Activated CD8-positive, alpha-beta T cell treated with anti-CD3 and anti-CD28 coated beads for 36 hours (primary cell): ENCODE measurements at regions of chr2 and their contacts with region 1.

Region 1: DNA sequence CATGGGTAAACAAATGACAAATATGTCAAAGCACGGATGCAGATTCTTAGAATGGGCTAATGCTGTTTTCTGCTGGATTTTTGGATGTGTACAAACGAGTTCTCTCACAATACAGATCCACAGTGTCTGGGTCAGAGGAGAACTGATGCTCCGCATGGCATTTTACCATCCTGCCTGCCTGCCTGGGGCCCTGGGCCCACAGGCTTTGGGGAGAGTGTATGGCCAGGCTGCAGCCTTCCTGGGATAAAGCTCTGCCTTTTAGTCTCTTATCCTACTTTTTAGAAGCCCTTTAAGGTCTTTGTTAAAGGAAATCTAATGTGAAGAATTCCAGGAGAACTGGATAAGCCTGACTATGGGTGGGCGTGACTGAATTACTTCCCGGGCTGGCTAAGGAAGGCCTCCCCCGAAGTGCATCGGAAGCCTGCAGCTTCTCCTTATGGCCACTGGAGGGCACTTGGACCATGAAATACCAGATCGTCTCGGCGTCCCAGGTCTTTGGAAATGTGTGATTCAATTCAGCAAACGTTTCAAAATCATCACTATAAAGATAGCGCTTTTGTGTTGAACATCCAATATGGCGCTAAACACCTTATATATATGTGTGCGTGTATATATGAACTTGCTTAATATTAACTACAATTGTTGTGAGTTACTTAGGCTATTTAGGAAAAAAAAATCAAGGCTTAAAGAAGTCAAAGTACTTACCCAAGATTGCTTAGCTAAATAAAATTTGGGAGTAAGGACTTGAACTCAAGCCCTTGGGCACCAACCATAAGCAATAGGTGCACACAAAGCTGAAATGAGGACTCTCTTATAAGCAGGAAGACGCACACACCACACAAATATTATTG is 15.2 kb upstream of the DNPEP start:
- DNase-seq: peak; percentile 79
- ATAC-seq: peak; percentile 99
- H3K4me3 Mint-ChIP-seq: no peak overlapping the region
- H3K27ac Mint-ChIP-seq: no peak overlapping the region
- H3K4me1 Mint-ChIP-seq: no peaks in the 10 kb centered on the region
- H3K27me3 Mint-ChIP-seq: peaks cover 8% of the 10 kb centered on the region
- CTCF ChIP-seq: peak; percentile 77

Region 2: DNA sequence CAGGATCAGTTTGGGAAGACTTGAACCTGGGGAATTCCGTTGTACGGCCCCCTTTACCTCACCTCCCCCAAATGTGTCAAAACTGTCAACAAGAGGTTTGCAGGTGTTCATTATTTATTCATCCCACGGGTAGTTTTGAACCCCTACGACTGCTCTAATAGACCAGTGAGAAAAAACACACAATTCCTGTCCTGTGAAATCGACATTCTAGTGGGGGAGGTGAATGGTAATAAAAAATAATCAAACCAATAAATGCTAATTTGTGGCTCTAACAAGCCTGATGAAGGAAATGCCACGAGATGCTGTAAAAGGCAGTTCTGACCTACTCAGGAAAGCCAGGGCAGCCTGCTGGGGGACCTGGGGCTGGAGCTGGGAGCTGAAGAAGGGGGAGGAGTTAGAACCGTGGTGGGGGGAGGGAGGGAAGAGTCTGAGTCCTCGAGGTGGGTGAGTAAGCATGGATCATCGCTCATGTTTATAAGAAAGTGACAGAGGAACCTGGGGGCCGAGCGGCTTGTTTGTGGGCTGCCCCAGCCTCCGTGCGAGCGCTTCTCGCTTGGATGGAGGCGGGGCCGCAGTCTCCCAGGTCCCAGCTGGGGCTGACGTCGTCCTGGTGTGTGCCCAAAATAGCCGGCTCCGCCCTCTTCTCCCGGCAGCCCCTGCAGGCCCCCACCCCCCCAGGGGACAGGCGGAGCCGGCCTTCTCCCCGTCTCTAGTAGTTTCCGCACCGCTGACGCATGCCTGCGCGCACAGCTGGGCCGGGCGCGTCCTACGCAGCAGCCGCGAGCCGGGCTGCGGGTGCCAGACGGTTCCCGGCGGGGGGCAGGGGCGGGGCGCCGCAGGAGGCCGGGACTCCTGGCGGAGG is 124.0 kb before region 1 on chr2 and contains the start of gene DNAJB2:
- CTCF ChIA-PET with region 1: no interaction called
- POLR2A ChIA-PET with region 1: no interaction called
- intact Hi-C with region 1: no loop called
- DNase-seq: peak; percentile 100
- ATAC-seq: peak; percentile 86
- H3K4me3 Mint-ChIP-seq: peak within 1 kb of the TSS; percentile 80
- H3K27ac Mint-ChIP-seq: peak within 1 kb of the TSS; percentile 95
- H3K4me1 Mint-ChIP-seq: peaks cover 45% of the 10 kb centered on the region
- H3K27me3 Mint-ChIP-seq: no peaks in the 10 kb centered on the region
- CTCF ChIP-seq: no peak
- total RNA-seq, gene DNAJB2: 61.8 to 63.3 TPM

Region 3: GRCh38 chr2:219388127-219388844 is 14.6 kb before region 1 on chr2:
- CTCF ChIA-PET with region 1: interaction called, 84 read pairs
- POLR2A ChIA-PET with region 1: interaction called, 10 read pairs
- intact Hi-C with region 1: no loop called
- DNase-seq: peak; percentile 99
- ATAC-seq: peak; percentile 81
- H3K4me3 Mint-ChIP-seq: peak overlapping the region; percentile 72
- H3K27ac Mint-ChIP-seq: peak overlapping the region; percentile 85
- H3K4me1 Mint-ChIP-seq: peaks cover 21% of the 10 kb centered on the region
- H3K27me3 Mint-ChIP-seq: no peaks in the 10 kb centered on the region
- CTCF ChIP-seq: peak; percentile 58

Region 4: DNA sequence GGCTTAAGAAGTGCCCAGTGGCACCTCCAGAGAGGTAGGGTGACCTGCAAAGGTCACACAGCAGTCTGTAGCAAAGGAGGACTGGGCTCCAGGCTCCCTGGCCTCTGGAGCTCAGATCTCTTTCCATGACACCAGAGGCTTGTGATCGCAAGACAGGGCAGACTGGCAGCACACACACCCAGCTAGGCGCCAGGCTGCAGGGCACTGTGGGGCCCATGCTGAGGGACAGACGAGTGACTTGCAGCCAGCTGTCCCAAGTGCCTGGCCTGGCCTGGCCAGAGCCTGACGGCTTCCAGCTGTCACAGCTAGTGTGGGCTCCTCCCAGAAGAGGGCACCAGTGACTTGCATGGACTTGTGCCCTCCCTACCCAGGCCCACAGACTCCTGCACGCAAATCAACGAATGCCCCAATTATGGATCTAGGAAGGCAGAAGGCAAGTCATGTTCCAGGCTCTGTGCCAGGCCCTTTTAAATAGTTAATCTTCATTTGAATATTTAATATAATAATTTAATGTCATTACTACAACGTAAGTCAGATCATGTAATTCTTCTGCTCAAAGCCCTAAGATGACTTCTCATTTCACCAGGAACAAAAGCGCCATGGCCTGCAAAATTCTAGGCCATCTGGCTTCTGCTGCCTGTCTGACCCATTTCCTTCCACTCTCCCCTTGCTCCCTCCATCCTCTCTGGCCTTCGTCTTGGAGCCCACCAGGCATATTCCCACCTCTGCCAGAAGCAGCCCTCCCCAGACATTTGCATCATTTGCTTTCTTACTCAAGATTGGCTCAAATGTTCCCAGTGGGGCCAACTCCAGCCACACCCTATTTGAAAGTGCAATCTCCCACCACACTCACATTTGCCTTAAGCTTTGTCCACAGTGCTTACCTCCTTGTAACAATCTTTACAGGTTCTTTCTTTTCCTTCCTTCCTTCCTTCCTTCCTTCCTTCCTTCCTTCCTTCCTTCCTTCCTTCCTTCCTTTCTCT is 28.0 kb after region 1 on chr2:
- CTCF ChIA-PET with region 1: interaction called, 35 read pairs
- POLR2A ChIA-PET with region 1: no interaction called
- intact Hi-C with region 1: no loop called
- DNase-seq: no peak
- ATAC-seq: peak; percentile 58
- H3K4me3 Mint-ChIP-seq: no peak overlapping the region
- H3K27ac Mint-ChIP-seq: no peak overlapping the region
- H3K4me1 Mint-ChIP-seq: no peaks in the 10 kb centered on the region
- H3K27me3 Mint-ChIP-seq: peaks cover 16% of the 10 kb centered on the region
- CTCF ChIP-seq: no peak

Region 5: DNA sequence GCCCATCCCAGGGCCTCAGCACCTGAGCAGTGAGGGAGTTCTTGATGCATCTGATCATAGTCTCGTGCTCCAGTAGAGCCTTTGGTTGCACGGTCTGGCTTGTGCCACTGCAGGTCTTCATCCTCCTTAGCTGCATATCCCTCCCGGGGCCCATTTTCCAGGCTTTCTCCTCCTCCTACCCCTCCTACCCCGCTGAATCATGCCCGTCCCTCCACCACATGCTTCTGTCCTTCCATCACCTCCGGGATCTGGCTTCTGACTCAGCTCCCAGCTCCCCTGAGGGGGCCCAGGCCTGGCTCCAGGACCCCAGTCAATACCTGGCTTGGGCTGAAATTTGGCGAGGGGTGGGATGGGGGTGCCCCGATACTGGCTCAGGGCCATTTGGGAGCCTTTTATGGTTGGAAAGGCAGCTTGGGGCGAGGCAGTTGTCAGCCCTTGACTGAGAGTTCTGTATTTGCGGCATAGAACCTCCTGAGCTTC is 50.0 kb after region 1 on chr2:
- CTCF ChIA-PET with region 1: interaction called, 14 read pairs
- POLR2A ChIA-PET with region 1: interaction called, 6 read pairs
- intact Hi-C with region 1: no loop called
- DNase-seq: no peak
- ATAC-seq: no peak
- H3K4me3 Mint-ChIP-seq: no peak overlapping the region
- H3K27ac Mint-ChIP-seq: no peak overlapping the region
- H3K4me1 Mint-ChIP-seq: peaks cover 25% of the 10 kb centered on the region
- H3K27me3 Mint-ChIP-seq: peaks cover 8% of the 10 kb centered on the region
- CTCF ChIP-seq: no peak

Region 6: GRCh38 chr2:219475697-219476651 is 73.1 kb after region 1 on chr2:
- CTCF ChIA-PET with region 1: interaction called, 21 read pairs
- POLR2A ChIA-PET with region 1: no interaction called
- intact Hi-C with region 1: no loop called
- DNase-seq: peak; percentile 84
- ATAC-seq: peak; percentile 96
- H3K4me3 Mint-ChIP-seq: no peak overlapping the region
- H3K27ac Mint-ChIP-seq: no peak overlapping the region
- H3K4me1 Mint-ChIP-seq: peaks cover 2% of the 10 kb centered on the region
- H3K27me3 Mint-ChIP-seq: no peaks in the 10 kb centered on the region
- CTCF ChIP-seq: peak; percentile 75

Region 7: GRCh38 chr2:219521066-219521880 is 118.4 kb after region 1 on chr2:
- CTCF ChIA-PET with region 1: interaction called, 159 read pairs
- POLR2A ChIA-PET with region 1: no interaction called
- intact Hi-C with region 1: no loop called
- DNase-seq: peak; percentile 30
- ATAC-seq: peak; percentile 65
- H3K4me3 Mint-ChIP-seq: no peak overlapping the region
- H3K27ac Mint-ChIP-seq: no peak overlapping the region
- H3K4me1 Mint-ChIP-seq: peaks cover 7% of the 10 kb centered on the region
- H3K27me3 Mint-ChIP-seq: peaks cover 63% of the 10 kb centered on the region
- CTCF ChIP-seq: peak; percentile 50

Region 8: DNA sequence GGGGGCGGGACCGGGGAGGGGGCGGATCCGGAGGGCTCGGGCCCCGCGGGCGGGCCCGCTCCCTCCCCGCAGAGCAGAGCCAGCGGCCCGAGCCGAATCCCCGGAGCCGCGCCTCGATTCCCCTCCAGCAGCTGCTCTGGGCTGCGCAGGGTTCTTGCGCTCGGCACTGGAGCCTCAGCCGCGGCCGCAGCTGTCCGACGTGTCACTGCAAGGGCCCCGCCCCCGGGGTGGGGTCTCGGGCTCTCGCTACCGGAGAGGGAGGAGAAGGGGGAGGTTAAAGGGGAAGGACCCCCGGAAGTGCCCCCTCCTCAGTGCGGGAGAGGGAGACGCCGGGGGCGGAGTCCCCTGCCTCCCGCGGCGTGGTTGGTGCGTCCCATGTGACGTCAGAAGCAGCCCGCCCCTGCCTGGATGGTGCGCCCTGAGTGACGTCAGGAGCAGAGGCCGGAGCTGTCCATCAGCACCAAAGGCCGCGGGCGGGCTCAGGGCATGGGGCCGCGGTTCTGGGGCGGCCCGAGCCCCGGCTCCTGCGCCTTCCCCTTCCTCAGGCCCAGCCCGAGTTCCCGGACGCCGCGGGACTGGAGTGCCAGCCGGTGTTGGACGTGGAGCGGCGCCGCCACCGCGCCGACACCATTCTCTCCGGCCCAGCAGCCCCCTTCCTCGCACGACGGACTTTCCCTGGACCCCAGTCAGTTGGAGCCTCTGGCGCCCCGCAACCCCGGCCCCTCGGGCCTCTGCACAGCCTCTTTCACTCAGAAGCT is 140.9 kb after region 1 on chr2 and contains the starts of genes CHPF and TMEM198:
- CTCF ChIA-PET with region 1: interaction called, 20 read pairs
- POLR2A ChIA-PET with region 1: no interaction called
- intact Hi-C with region 1: no loop called
- DNase-seq: peak; percentile 97
- ATAC-seq: peak; percentile 85
- H3K4me3 Mint-ChIP-seq: peak within 1 kb of the TSS; percentile 93
- H3K27ac Mint-ChIP-seq: peak within 1 kb of the TSS; percentile 77
- H3K4me1 Mint-ChIP-seq: peaks cover 21% of the 10 kb centered on the region
- H3K27me3 Mint-ChIP-seq: peaks cover 15% of the 10 kb centered on the region
- CTCF ChIP-seq: no peak
- total RNA-seq, gene CHPF: 16.6 to 18.4 TPM
- total RNA-seq, gene TMEM198: 2.1 to 2.2 TPM